ENCODE measurements at regions of chr4 and their contacts with region 1.

Region 1: GRCh38 chr4:182212211-182212761 is 30.9 kb upstream of the TENM3 start:
- DNase-seq: no peak
- ATAC-seq: no peak

Region 2: GRCh38 chr4:183554878-183555585 is 1342.7 kb after region 1 on chr4:
- intact Hi-C with region 1: loop called (anchors 5 kb)
- DNase-seq: no peak
- ATAC-seq: no peak

Measured in sciatic nerve (tissue), 2 donors.